PC-9 (cell line): ENCODE measurements at regions of chr6 and their contacts with region 1.

Region 1: DNA sequence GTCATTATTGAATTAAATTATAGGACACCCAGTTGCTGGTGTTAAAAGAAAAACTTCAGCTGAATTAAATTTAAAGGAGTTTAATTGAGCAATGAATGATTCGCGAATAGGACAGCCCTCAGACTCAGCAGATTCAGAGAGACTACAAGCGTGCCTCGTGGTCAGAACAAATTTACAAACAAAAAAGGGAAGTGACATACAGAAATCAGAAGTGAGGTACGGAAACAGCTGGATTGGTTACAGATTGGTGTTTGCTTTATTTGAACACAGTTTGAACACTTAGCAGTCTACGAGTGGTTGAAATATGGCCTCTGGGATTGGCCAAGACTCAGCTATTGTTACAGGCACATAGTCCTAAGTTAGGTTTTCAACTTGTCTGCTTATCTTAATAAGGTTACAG is 25.8 kb upstream of the TNFRSF21 start:
- DNase-seq: no peak
- H3K4me3 ChIP-seq: no peak overlapping the region
- H3K27ac ChIP-seq: no peak overlapping the region
- H3K4me1 ChIP-seq: peaks cover 10% of the 10 kb centered on the region; the same call in 1 of the 2 replicates
- H3K27me3 ChIP-seq: no peaks in the 10 kb centered on the region
- CTCF ChIP-seq: no peak

Region 2: GRCh38 chr6:47407348-47408281 is 72.1 kb after region 1 on chr6:
- CTCF ChIA-PET with region 1: no interaction called
- POLR2A ChIA-PET with region 1: interaction called, 12 read pairs
- intact Hi-C with region 1: loop called (anchors 5 kb)
- DNase-seq: peak in 1 of 2 experiments; percentile 98
- H3K4me3 ChIP-seq: no peak overlapping the region
- H3K27ac ChIP-seq: peak overlapping the region; percentile 92
- H3K4me1 ChIP-seq: peaks cover 58% of the 10 kb centered on the region
- H3K27me3 ChIP-seq: no peaks in the 10 kb centered on the region
- CTCF ChIP-seq: no peak

Region 3: GRCh38 chr6:48048451-48049129 is 713.1 kb after region 1 on chr6:
- CTCF ChIA-PET with region 1: no interaction called
- POLR2A ChIA-PET with region 1: no interaction called
- intact Hi-C with region 1: no loop called
- DNase-seq: no peak
- H3K4me3 ChIP-seq: no peak overlapping the region
- H3K27ac ChIP-seq: no peak overlapping the region
- H3K4me1 ChIP-seq: no peaks in the 10 kb centered on the region
- H3K27me3 ChIP-seq: no peaks in the 10 kb centered on the region
- CTCF ChIP-seq: no peak